HepG2 (cell line): ENCODE measurements at regions of chr3 and their contacts with region 1.

Region 1: GRCh38 chr3:105518806-105519418 is 152.2 kb downstream of the ALCAM start:
- DNase-seq: peak; percentile 35
- ATAC-seq: peak; percentile 78
- H3K4me3 ChIP-seq: no peak overlapping the region
- H3K27ac ChIP-seq: no peak overlapping the region
- H3K4me1 ChIP-seq: no peaks in the 10 kb centered on the region
- H3K27me3 ChIP-seq: no peaks in the 10 kb centered on the region
- CTCF ChIP-seq: peak; percentile 73
- EP300 ChIP-seq: no peak
- POLR2A ChIP-seq: no peak
- RAD21 ChIP-seq: peak; percentile 66

Region 2: GRCh38 chr3:103991461-103992115 is 1527.3 kb before region 1 on chr3:
- CTCF ChIA-PET with region 1: no interaction called
- POLR2A ChIA-PET with region 1: no interaction called
- in situ Hi-C with region 1: no loop called
- intact Hi-C with region 1: loop called (anchors 10 kb)
- DNase-seq: no peak
- ATAC-seq: peak; percentile 69
- H3K4me3 ChIP-seq: no peak overlapping the region
- H3K27ac ChIP-seq: no peak overlapping the region
- H3K4me1 ChIP-seq: 0 out of 2 replicates have a peak, but pooled peaks cover 9% of the 10 kb centered on the region
- H3K27me3 ChIP-seq: 0 out of 5 replicates have a peak, but pooled peaks cover 0 to 4% of the 10 kb centered on the region in 2 experiments
- CTCF ChIP-seq: peak; percentile 50
- EP300 ChIP-seq: no peak
- POLR2A ChIP-seq: no peak
- RAD21 ChIP-seq: no peak

Region 3: GRCh38 chr3:104604369-104605010 is 914.4 kb before region 1 on chr3:
- CTCF ChIA-PET with region 1: no interaction called
- POLR2A ChIA-PET with region 1: no interaction called
- in situ Hi-C with region 1: loop called (anchors 25 kb)
- intact Hi-C with region 1: no loop called
- DNase-seq: no peak
- ATAC-seq: 0 out of 3 replicates have a peak, but pooled peaks have one; percentile 41
- H3K4me3 ChIP-seq: no peak overlapping the region
- H3K27ac ChIP-seq: no peak overlapping the region
- H3K4me1 ChIP-seq: peaks cover 10% of the 10 kb centered on the region
- H3K27me3 ChIP-seq: no peaks in the 10 kb centered on the region
- CTCF ChIP-seq: no peak
- EP300 ChIP-seq: no peak
- POLR2A ChIP-seq: no peak
- RAD21 ChIP-seq: no peak

Region 4: GRCh38 chr3:105385819-105386508 is 132.9 kb before region 1 on chr3:
- CTCF ChIA-PET with region 1: no interaction called
- POLR2A ChIA-PET with region 1: no interaction called
- in situ Hi-C with region 1: no loop called
- intact Hi-C with region 1: loop called (anchors 5 kb)
- DNase-seq: no peak
- ATAC-seq: no peak
- H3K4me3 ChIP-seq: no peak overlapping the region
- H3K27ac ChIP-seq: peak overlapping the region; percentile 71
- H3K4me1 ChIP-seq: peaks cover 38% of the 10 kb centered on the region
- H3K27me3 ChIP-seq: no peaks in the 10 kb centered on the region
- CTCF ChIP-seq: no peak
- EP300 ChIP-seq: no peak
- POLR2A ChIP-seq: no peak
- RAD21 ChIP-seq: no peak

Region 5: DNA sequence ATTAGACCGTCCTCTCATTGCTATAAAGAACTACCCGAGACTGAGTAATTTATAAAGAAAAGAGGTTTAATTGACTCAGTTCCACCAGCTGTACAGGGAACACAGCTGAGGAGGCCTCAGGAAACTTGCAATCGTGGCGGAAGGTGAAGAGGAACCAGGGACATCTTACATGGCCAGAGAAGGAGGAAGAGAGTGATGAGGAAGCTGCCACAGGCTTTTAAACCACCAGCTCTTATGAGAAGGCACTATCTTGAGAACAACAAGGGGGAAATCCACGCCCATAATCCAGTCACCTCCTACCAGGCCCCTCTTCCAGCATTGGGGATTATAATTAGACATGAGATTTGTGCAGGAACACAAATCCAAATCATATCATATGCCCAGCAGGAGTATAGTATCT is 13.7 kb before region 1 on chr3:
- CTCF ChIA-PET with region 1: no interaction called
- POLR2A ChIA-PET with region 1: interaction called, 5 read pairs
- in situ Hi-C with region 1: no loop called
- intact Hi-C with region 1: loop called (anchors 2 kb)
- DNase-seq: no peak
- ATAC-seq: no peak
- H3K4me3 ChIP-seq: peak overlapping the region in 1 of 3 experiments; percentile 77; a peak in 1 of 6 replicates
- H3K27ac ChIP-seq: peak overlapping the region; percentile 81
- H3K4me1 ChIP-seq: peaks cover 43% of the 10 kb centered on the region
- H3K27me3 ChIP-seq: no peaks in the 10 kb centered on the region; a peak in 1 of 5 replicates
- CTCF ChIP-seq: no peak
- EP300 ChIP-seq: no peak
- POLR2A ChIP-seq: no peak
- RAD21 ChIP-seq: no peak